ENCODE measurements at regions of chr12 and their contacts with region 1.

Region 1: GRCh38 chr12:109110988-109111495 is 5.3 kb upstream of the ACACB start:
- DNase-seq: peak; percentile 69
- ATAC-seq: peak; percentile 91
- H3K4me3 Mint-ChIP-seq: peak overlapping the region; percentile 62
- H3K27ac Mint-ChIP-seq: peak overlapping the region; percentile 73
- H3K4me1 Mint-ChIP-seq: peaks cover 18% of the 10 kb centered on the region
- H3K27me3 Mint-ChIP-seq: no peaks in the 10 kb centered on the region

Region 2: GRCh38 chr12:108964371-108965352 is 146.4 kb before region 1 on chr12:
- CTCF ChIA-PET with region 1: no interaction called
- DNase-seq: no peak
- ATAC-seq: no peak
- H3K4me3 Mint-ChIP-seq: no peak overlapping the region
- H3K27ac Mint-ChIP-seq: no peak overlapping the region
- H3K4me1 Mint-ChIP-seq: no peaks in the 10 kb centered on the region
- H3K27me3 Mint-ChIP-seq: peaks cover 11% of the 10 kb centered on the region

Region 3: GRCh38 chr12:109093022-109093918 is 17.8 kb before region 1 on chr12 and contains the start of gene ALKBH2:
- CTCF ChIA-PET with region 1: interaction called, 29 read pairs
- DNase-seq: peak; percentile 95
- ATAC-seq: peak; percentile 73
- H3K4me3 Mint-ChIP-seq: peak within 1 kb of the TSS; percentile 78
- H3K27ac Mint-ChIP-seq: peak within 1 kb of the TSS; percentile 88
- H3K4me1 Mint-ChIP-seq: peaks cover 43% of the 10 kb centered on the region
- H3K27me3 Mint-ChIP-seq: no peaks in the 10 kb centered on the region
- total RNA-seq, gene ALKBH2: 14.0 to 17.2 TPM

Region 4: DNA sequence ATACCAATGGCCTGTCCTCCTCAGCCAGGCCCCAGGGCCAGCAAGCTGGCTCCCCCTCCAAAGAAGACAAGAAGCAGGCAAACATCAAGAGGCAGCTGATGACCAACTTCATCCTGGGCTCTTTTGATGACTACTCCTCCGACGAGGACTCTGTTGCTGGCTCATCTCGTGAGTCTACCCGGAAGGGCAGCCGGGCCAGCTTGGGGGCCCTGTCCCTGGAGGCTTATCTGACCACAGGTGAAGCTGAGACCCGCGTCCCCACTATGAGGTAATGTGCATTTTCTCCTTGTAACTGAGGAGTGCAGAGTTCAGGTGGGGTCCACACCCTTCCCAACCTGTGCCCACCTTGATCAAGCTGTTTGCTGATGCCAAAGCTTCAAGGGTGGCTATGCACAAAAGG is 28.7 kb after region 1 on chr12:
- CTCF ChIA-PET with region 1: interaction called, 15 read pairs
- DNase-seq: no peak
- ATAC-seq: no peak
- H3K4me3 Mint-ChIP-seq: no peak overlapping the region
- H3K27ac Mint-ChIP-seq: no peak overlapping the region
- H3K4me1 Mint-ChIP-seq: peaks cover 6% of the 10 kb centered on the region
- H3K27me3 Mint-ChIP-seq: peaks cover 5% of the 10 kb centered on the region

Region 5: DNA sequence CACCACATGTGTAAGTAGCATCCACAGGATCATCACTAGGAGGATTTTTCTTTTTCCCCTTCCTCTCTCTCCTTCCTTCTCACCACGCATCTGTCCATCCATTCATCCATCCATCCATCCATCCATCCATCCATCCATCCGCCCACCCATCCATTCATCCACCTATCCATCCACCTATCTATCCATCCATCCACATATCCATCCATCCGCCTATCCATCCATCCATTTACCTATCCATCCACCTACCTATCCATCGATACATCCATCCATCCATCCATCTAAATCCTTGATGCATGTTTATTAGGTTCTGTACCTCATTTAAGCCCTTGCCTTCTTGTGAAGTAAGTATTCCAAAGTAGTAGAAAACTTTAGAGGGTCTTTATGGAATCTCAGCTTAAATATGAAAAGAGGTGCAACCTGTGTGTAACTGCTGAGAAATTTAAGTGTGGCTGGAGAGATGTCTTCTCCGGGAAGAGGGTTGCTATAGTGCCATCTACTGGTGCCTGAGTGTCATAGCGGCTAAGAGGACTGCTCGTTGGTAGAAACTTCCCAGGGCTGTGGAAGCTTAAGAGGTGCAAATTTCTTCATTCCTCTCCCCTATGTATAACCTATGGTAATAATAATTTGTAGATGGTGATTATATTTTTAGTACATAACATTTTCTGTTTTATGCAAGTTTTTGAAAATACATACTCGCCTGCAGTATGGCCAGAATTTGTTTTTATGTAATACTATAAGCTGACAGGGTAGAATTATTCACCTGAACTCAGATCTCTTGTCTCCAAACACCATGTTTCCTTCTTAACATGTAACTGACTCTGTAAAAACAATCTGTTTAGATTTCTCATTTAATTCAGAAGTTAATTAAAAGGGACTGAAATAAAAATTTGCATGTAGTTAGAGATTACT is 282.6 kb after region 1 on chr12:
- CTCF ChIA-PET with region 1: interaction called, 17 read pairs
- DNase-seq: peak; percentile 58
- ATAC-seq: peak; percentile 66
- H3K4me3 Mint-ChIP-seq: no peak overlapping the region
- H3K27ac Mint-ChIP-seq: no peak overlapping the region
- H3K4me1 Mint-ChIP-seq: no peaks in the 10 kb centered on the region
- H3K27me3 Mint-ChIP-seq: peaks cover 33% of the 10 kb centered on the region